Activated CD8-positive, alpha-beta memory T cell treated with anti-CD3 and anti-CD28 coated beads, Interleukin-2, amount 10 ng/mL, durations not matched to agents 7 days and 5 days (primary cell): ENCODE measurements at regions of chr1 and their contacts with region 1.

Region 1: GRCh38 chr1:161440312-161440894 is 64.9 kb upstream of the FCGR2A start:
- DNase-seq: peak; percentile 80
- ATAC-seq: peak; percentile 67
- H3K4me3 Mint-ChIP-seq: peak overlapping the region; percentile 82
- H3K27ac Mint-ChIP-seq: peak overlapping the region; percentile 90
- H3K4me1 Mint-ChIP-seq: peaks cover 17% of the 10 kb centered on the region
- H3K27me3 Mint-ChIP-seq: peaks cover 28% of the 10 kb centered on the region

Region 2: DNA sequence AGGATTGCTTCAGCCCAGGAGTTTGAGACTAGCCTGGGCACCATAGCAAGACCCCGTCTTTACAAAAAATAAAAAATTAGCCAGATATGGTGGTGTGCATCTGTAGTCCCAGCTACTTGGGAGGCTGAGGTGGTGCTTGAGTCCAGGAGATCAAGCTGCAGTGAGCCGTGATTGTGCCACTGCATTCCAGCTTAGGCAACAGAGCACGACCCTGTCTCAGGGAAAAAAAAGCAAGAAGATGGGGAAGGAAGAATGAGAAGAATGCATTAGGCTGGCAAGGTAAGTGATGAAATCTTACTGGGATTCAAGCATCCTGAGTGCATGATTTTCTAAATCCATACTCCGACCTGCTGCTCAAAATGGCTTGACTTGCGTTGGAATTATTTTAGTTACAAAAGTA is 175.1 kb before region 1 on chr1:
- CTCF ChIA-PET with region 1: no interaction called
- DNase-seq: no peak
- ATAC-seq: no peak
- H3K4me3 Mint-ChIP-seq: no peak overlapping the region
- H3K27ac Mint-ChIP-seq: no peak overlapping the region
- H3K4me1 Mint-ChIP-seq: peaks cover 3% of the 10 kb centered on the region
- H3K27me3 Mint-ChIP-seq: peaks cover 31% of the 10 kb centered on the region

Region 3: GRCh38 chr1:161399257-161399998 is 41.0 kb before region 1 on chr1:
- CTCF ChIA-PET with region 1: interaction called, 16 read pairs
- DNase-seq: peak; percentile 95
- ATAC-seq: peak; percentile 84
- H3K4me3 Mint-ChIP-seq: peak overlapping the region; percentile 92
- H3K27ac Mint-ChIP-seq: peak overlapping the region; percentile 100
- H3K4me1 Mint-ChIP-seq: peaks cover 37% of the 10 kb centered on the region
- H3K27me3 Mint-ChIP-seq: no peaks in the 10 kb centered on the region

Region 4: DNA sequence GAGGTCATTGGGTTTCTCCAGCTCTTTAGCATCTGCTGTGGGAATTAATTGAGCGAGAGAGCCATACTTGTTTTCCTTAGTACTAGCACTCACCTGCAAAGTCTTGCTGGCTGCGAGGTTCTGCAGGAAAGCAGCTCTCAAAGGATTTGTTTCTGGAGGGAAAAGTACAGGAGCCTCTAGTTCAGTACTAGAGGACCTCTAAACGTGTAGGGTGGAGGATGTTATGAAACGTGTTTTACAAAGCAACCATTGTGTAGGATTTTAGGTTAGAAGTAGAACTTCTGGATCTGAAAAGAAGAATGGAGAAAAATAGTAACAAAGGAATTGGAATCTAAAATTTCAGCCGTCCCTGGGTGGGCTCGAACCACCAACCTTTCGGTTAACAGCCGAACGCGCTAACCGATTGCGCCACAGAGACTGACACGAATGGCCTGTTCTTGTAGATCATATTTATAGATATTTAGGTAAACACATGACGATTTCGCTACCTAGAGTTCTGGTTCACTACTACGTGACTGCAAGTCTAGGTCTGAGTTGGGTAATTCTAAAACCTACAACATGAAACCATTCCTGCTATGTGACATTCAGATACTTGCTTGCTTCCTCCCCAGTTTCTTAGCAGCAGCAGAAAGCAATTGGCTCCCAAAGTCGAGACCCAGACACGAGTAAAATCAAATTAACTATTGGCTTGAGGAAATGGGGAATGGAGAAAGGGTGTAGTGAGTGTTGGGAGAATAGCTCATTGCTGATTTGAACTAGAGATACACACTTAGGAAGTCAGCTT is 12.5 kb before region 1 on chr1:
- CTCF ChIA-PET with region 1: interaction called, 18 read pairs
- DNase-seq: peak; percentile 57
- ATAC-seq: peak; percentile 57
- H3K4me3 Mint-ChIP-seq: peak overlapping the region; percentile 52
- H3K27ac Mint-ChIP-seq: no peak overlapping the region
- H3K4me1 Mint-ChIP-seq: peaks cover 21% of the 10 kb centered on the region
- H3K27me3 Mint-ChIP-seq: peaks cover 36% of the 10 kb centered on the region

Region 5: GRCh38 chr1:161473363-161473762 is 33.0 kb after region 1 on chr1:
- CTCF ChIA-PET with region 1: no interaction called
- DNase-seq: peak; percentile 48
- ATAC-seq: no peak
- H3K4me3 Mint-ChIP-seq: peak overlapping the region; percentile 24
- H3K27ac Mint-ChIP-seq: no peak overlapping the region
- H3K4me1 Mint-ChIP-seq: peaks cover 8% of the 10 kb centered on the region
- H3K27me3 Mint-ChIP-seq: peaks cover 35% of the 10 kb centered on the region